Activated T-helper 2 cell treated with anti-CD3 and anti-CD28 coated beads, Interferon-gamma antibody, Interleukin-2, Interleukin-4, amounts not matched to agents 10 μg/mL and 5 μg/mL and 100 μg/mL, durations not matched to agents 14 hours and 24 hours and 36 hours (primary cell): ENCODE measurements at regions of chr16 and their contacts with region 1.

Region 1: GRCh38 chr16:15949210-15950160 is at the start of gene ABCC1:
- DNase-seq: peak; percentile 36
- H3K4me3 Mint-ChIP-seq: peak within 1 kb of the TSS; percentile 99
- H3K27ac Mint-ChIP-seq: peak within 1 kb of the TSS; percentile 100
- H3K4me1 Mint-ChIP-seq: peaks cover 37% of the 10 kb centered on the region
- H3K27me3 Mint-ChIP-seq: no peaks in the 10 kb centered on the region
- total RNA-seq, gene ABCC1: 95.7 and 99.4 TPM in 2 replicates

Region 2: GRCh38 chr16:15888072-15888976 is 61.2 kb before region 1 on chr16 and contains the start of gene CEP20:
- intact Hi-C with region 1: loop called (anchors 2 kb)
- DNase-seq: peak; percentile 100
- H3K4me3 Mint-ChIP-seq: peak within 1 kb of the TSS; percentile 98
- H3K27ac Mint-ChIP-seq: peak within 1 kb of the TSS; percentile 97
- H3K4me1 Mint-ChIP-seq: peaks cover 30% of the 10 kb centered on the region
- H3K27me3 Mint-ChIP-seq: no peaks in the 10 kb centered on the region
- total RNA-seq, gene CEP20: 39.4 and 39.7 TPM in 2 replicates

Region 3: GRCh38 chr16:15899538-15900100 is 49.9 kb before region 1 on chr16:
- intact Hi-C with region 1: loop called (anchors 2 kb)
- DNase-seq: peak; percentile 52
- H3K4me3 Mint-ChIP-seq: no peak overlapping the region
- H3K27ac Mint-ChIP-seq: peak overlapping the region; percentile 70
- H3K4me1 Mint-ChIP-seq: peaks cover 35% of the 10 kb centered on the region
- H3K27me3 Mint-ChIP-seq: no peaks in the 10 kb centered on the region

Region 4: DNA sequence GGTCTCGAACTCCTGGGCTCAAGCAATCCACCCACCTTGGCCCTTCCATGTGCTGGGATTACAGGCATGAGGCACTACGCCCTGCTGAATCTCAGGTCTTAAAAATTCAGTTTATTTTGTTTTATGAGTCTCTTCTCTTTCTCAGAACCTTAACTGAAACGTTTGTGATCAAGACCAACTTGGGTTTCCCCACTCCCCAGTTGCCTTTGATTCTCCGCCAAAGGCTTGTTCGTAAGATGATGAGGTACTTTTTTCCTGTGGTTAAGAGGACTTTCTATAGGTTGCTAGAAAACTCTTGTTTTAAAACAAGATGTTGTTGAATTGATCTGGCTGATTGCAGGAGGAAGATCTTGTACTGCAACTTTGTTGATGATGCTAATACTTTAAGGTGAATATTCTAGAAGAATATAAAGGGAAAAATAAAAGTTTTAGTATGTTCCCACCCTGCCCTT is 11.6 kb after region 1 on chr16:
- intact Hi-C with region 1: loop called (anchors 1 kb)
- DNase-seq: peak; percentile 74
- H3K4me3 Mint-ChIP-seq: peak overlapping the region; percentile 73
- H3K27ac Mint-ChIP-seq: peak overlapping the region; percentile 98
- H3K4me1 Mint-ChIP-seq: peaks cover 68% of the 10 kb centered on the region
- H3K27me3 Mint-ChIP-seq: no peaks in the 10 kb centered on the region

Region 5: GRCh38 chr16:15976929-15977637 is 27.6 kb after region 1 on chr16:
- intact Hi-C with region 1: no loop called
- DNase-seq: no peak
- H3K4me3 Mint-ChIP-seq: no peak overlapping the region
- H3K27ac Mint-ChIP-seq: no peak overlapping the region
- H3K4me1 Mint-ChIP-seq: peaks cover 7% of the 10 kb centered on the region
- H3K27me3 Mint-ChIP-seq: no peaks in the 10 kb centered on the region

Region 6: DNA sequence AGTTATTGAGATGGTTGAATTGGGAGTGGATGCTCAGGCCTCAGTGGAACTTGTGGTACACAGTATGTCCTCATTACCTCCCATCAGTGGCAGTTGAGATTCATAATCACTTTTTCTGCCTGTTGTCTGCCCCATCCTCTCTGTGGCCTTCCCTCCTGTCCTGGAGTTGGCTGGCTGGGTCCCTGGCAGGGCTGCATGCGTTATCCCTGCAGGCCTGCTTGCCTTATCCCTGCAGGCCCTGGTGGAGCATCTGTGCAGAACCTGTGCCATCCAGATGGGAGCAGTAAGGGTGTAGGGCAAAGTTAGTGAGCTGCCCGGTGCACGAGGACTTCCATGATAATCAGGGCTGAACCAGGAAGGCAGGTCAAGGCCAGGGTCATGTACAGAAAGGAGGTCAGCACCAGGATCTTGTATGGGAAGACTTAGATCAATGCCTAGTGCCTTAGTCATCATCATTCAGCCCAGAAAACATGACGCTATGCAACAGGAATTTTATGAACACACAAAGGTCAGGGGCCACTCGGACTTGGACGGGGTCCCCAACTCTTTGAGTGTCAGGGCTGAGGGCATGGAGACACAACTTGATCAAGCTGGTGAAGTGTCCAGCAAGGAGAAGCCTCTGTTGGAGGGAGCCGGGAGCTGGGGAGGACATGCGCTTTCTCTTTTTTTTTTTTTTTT is 47.1 kb after region 1 on chr16:
- intact Hi-C with region 1: loop called (anchors 10 kb)
- DNase-seq: no peak
- H3K4me3 Mint-ChIP-seq: no peak overlapping the region
- H3K27ac Mint-ChIP-seq: peak overlapping the region; percentile 38
- H3K4me1 Mint-ChIP-seq: peaks cover 49% of the 10 kb centered on the region
- H3K27me3 Mint-ChIP-seq: no peaks in the 10 kb centered on the region

Region 7: GRCh38 chr16:16025214-16025968 is 75.9 kb after region 1 on chr16:
- intact Hi-C with region 1: loop called (anchors 5 kb)
- DNase-seq: peak; percentile 14
- H3K4me3 Mint-ChIP-seq: peak overlapping the region; percentile 13
- H3K27ac Mint-ChIP-seq: peak overlapping the region; percentile 85
- H3K4me1 Mint-ChIP-seq: peaks cover 39% of the 10 kb centered on the region
- H3K27me3 Mint-ChIP-seq: no peaks in the 10 kb centered on the region